Calu3 (cell line): ENCODE measurements at regions of chr11 and their contacts with region 1.

Region 1: DNA sequence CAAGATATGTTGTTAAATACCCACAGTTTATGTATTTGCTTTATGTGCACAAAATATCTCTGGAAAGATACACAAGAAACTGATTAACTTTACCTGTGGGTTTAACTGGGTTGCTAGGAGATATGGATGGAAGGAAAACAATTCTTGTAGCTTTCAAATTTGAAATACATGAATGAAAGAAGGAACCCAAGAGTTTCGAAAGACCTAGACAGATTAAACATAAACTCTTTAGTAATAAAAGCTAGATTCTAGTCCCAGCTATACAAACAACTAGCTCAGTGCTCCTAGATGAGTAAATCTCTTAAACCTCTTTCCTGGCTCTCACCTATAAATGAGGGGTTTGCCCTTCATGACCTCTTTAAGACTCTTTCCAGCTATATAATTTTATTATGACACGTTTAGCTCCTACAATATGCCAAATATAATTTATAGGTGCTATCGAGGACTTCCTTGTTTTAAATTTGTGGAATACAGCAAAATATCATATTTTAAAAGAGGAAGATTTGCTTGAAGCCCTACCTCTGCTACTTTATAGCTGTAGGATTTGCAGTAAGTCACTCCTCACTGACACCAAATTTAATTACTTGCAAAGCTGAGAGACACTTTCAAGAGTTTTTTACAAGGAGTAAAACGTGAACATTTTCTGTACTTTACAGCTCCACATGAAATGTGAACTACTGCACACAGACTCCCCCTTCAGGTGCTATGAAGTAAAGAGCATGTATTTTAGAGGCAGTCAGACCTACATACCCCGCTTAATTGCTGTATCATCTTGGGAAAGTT is 50.7 kb downstream of the RRAS2 start:
- DNase-seq: peak; percentile 8
- H3K4me3 Mint-ChIP-seq: no peak overlapping the region
- H3K27ac Mint-ChIP-seq: no peak overlapping the region
- H3K4me1 Mint-ChIP-seq: peaks cover 3% of the 10 kb centered on the region
- H3K27me3 Mint-ChIP-seq: no peaks in the 10 kb centered on the region
- CTCF ChIP-seq: peak; percentile 29

Region 2: GRCh38 chr11:14358729-14359439 is 50.6 kb after region 1 on chr11 and contains the start of gene RRAS2:
- CTCF ChIA-PET with region 1: no interaction called
- intact Hi-C with region 1: loop called (anchors 5 kb)
- DNase-seq: peak; percentile 81
- H3K4me3 Mint-ChIP-seq: peak within 1 kb of the TSS; percentile 99
- H3K27ac Mint-ChIP-seq: peak within 1 kb of the TSS; percentile 99
- H3K4me1 Mint-ChIP-seq: peaks cover 9% of the 10 kb centered on the region
- H3K27me3 Mint-ChIP-seq: no peaks in the 10 kb centered on the region
- CTCF ChIP-seq: no peak
- total RNA-seq, gene RRAS2: 37.2 and 42.8 TPM in 2 replicates

Region 3: DNA sequence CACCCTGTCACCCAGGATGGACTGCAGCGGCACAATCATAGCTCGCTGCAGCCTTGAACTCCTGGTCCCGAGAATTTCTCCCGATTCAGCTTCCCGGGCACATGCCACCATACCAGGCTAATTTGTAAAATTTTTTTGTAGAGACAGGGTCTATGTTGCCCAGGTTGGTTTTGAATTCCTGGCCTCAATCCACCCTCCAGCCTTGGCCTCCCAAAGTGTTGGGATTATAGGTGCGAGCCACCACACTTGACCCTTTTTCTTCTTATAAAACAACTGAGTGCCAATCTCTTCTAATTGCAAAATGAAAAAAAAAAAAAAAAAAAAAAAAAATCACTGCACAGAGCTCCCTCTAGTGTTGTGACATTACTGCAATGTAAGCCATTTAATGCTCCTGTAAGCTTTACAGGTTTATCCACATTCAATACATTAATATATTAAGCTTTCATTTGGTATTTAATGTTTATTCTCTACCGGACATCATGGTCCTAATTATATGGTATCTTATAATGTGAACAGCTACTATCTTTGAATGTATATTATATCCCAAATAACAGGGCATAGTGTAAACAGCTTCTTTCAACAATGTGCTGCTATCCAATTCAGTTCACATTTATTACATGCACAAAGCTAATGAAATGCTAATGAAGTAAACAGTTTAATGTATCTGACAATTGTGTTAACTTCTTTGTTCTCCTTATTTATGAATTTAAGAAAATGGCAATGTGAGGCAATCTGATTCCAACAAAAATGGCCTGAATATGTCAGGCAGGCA is 146.7 kb after region 1 on chr11:
- CTCF ChIA-PET with region 1: interaction called, 11 read pairs
- intact Hi-C with region 1: no loop called
- DNase-seq: no peak
- H3K4me3 Mint-ChIP-seq: no peak overlapping the region
- H3K27ac Mint-ChIP-seq: no peak overlapping the region
- H3K4me1 Mint-ChIP-seq: no peaks in the 10 kb centered on the region
- H3K27me3 Mint-ChIP-seq: no peaks in the 10 kb centered on the region
- CTCF ChIP-seq: peak; percentile 39

Region 4: DNA sequence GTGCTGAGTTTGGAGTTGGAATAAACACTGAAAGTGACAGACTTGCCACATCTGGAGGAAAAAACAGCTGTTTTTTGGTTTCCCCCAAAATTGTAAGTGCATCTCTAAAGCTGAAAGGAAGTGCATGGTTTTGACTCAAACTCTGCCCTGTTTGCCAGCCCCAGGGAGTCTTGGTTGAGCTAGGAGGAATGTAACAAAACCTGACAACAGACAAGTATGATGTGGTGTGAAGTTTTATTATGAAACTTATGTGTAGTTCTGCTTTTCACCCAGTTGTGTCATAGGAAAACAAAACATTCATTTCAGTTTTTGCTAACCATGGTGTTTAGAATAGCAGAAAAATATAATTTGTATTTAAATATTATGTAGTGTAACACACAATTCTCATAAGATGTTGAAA is 303.6 kb after region 1 on chr11:
- CTCF ChIA-PET with region 1: no interaction called
- intact Hi-C with region 1: no loop called
- DNase-seq: no peak
- H3K4me3 Mint-ChIP-seq: no peak overlapping the region
- H3K27ac Mint-ChIP-seq: no peak overlapping the region
- H3K4me1 Mint-ChIP-seq: no peaks in the 10 kb centered on the region
- H3K27me3 Mint-ChIP-seq: no peaks in the 10 kb centered on the region
- CTCF ChIP-seq: no peak

Region 5: DNA sequence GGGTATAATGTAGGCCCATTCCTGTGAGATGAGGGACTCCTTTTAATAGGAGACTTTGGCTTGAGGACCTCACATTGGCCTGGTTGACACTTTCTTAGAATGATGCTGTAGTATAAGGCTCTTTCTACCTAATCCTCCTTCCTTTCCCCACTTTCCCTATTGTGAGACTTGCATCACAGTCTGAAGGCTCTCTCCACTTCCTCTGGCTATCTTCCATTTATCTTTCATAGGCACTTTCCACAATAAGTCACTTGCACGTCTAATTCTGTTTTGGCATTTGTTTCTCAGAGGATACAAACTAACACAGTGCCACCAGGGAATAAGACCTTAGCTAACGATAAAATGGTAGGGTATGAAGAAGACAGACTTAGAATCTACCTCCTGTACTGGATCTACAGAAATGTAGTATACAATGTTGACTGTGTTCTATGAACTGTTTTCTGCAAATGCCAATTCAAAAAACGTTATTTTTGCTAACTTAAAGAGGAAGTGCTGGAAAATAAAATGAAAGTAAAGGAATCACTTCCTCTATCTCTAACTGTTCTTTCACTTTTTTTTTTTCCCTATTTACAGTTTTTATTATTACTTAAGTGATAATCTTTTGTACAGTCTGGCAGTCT is 317.4 kb after region 1 on chr11:
- CTCF ChIA-PET with region 1: no interaction called
- intact Hi-C with region 1: no loop called
- DNase-seq: no peak
- H3K4me3 Mint-ChIP-seq: no peak overlapping the region
- H3K27ac Mint-ChIP-seq: no peak overlapping the region
- H3K4me1 Mint-ChIP-seq: no peaks in the 10 kb centered on the region
- H3K27me3 Mint-ChIP-seq: no peaks in the 10 kb centered on the region
- CTCF ChIP-seq: no peak